ENCODE measurements at regions of chr11 and their contacts with region 1.

Region 1: GRCh38 chr11:73350908-73351636 is 25.1 kb upstream of the RELT start:
- DNase-seq: peak; percentile 72 to 77 (median 75)
- H3K4me3 ChIP-seq: no peak overlapping the region
- H3K4me3 Mint-ChIP-seq: no peak overlapping the region
- H3K27ac ChIP-seq: no peak overlapping the region
- H3K27ac Mint-ChIP-seq: peak overlapping the region; percentile 44 to 87 (median 73)
- H3K4me1 ChIP-seq: no peaks in the 10 kb centered on the region
- H3K4me1 Mint-ChIP-seq: peaks cover 0 to 6% (median 2%) of the 10 kb centered on the region in 4 donors
- H3K27me3 ChIP-seq: no peaks in the 10 kb centered on the region
- H3K27me3 Mint-ChIP-seq: peaks cover 0 to 5% of the 10 kb centered on the region in 2 donors

Region 2: DNA sequence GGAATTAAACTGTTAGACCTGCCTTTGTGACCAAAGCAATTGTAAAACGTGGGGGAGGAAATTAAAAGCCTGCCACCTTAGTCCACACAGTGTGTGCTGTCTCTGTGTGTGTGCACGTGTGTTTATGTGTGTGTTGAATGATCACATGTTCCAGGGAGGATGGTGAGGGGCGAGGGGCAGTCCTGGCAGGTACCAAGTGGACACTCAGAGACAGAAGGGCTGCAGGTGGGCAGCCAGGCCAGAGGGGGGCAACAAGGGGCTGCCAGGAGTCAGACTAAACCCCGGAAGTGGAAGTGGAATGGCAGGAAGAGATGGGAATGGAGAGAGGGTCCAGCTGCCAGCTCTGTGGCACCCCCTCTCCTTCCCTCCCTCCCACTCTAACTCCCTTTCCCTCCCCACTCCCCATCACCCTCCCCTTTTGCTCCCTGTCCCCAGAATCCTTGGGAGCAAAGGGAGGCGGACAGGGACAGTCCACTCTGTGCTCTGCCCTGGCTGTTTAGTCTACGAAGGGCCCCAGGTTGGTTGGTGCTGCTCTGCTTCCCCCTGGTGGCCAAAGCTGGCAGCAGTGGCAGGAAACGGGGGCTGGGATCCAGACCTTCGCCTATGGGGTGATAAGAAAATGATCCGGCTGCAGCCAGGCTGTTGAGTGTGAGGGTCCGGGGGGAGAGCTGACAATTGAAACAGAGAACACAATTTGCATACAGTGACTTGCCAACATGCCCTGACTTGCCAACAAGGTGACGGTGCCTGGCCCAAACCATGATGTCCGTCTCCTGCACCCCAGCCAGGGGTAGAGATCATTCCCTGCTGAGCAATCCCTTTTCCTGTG is 108.6 kb before region 1 on chr11:
- CTCF ChIA-PET with region 1: no interaction called
- POLR2A ChIA-PET with region 1: no interaction called
- intact Hi-C with region 1: no loop called
- DNase-seq: peak in 4 of 5 donors; percentile 45 to 52 (median 48)
- H3K4me3 ChIP-seq: no peak overlapping the region
- H3K4me3 Mint-ChIP-seq: peak overlapping the region in 2 of 8 donors; percentile 52 to 56
- H3K27ac ChIP-seq: no peak overlapping the region
- H3K27ac Mint-ChIP-seq: peak overlapping the region in 1 of 7 donors; percentile 68
- H3K4me1 ChIP-seq: no peaks in the 10 kb centered on the region
- H3K4me1 Mint-ChIP-seq: peaks cover 0 to 4% (median 3%) of the 10 kb centered on the region in 4 donors
- H3K27me3 ChIP-seq: no peaks in the 10 kb centered on the region
- H3K27me3 Mint-ChIP-seq: peaks cover 2 to 12% of the 10 kb centered on the region in 2 donors

Region 3: DNA sequence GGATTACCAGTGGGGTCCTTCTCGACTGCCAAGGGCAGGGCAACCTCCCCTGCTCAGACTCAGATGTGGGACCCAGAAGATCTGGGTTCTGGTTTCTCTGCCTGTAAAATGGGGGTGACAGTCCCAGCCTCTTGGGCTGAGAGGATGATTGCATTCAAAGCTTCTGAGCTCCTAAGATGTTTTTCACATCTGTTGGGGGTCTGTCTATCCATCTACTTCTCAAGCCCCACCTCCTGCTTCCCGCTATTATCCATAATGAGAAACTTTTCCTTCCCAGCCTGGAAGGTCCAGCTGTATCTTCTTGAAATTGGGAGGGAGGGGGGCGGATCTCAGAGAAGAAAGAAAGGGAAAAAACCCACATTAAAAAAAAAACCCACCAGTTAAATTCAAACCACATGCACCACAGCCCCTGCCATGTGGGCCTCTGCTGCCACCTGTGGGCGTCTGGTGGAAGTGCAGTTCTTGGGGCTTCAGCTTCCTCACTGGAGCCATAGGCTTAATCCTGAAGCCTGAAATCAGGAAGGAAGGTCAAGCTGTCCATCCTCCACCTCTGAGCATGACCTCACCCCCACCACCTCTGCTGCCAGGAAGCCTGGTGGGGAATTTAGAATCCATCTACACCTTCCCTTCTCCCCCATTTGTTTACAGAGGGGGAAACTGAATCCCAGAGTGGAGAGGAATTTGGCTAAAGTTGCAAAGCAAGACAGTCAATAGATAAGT is 15.7 kb before region 1 on chr11:
- CTCF ChIA-PET with region 1: interaction called, 21 read pairs
- POLR2A ChIA-PET with region 1: no interaction called
- intact Hi-C with region 1: no loop called
- DNase-seq: peak; percentile 62 to 72 (median 67)
- H3K4me3 ChIP-seq: no peak overlapping the region
- H3K4me3 Mint-ChIP-seq: no peak overlapping the region
- H3K27ac ChIP-seq: no peak overlapping the region
- H3K27ac Mint-ChIP-seq: no peak overlapping the region
- H3K4me1 ChIP-seq: no peaks in the 10 kb centered on the region
- H3K4me1 Mint-ChIP-seq: no peaks in the 10 kb centered on the region
- H3K27me3 ChIP-seq: no peaks in the 10 kb centered on the region
- H3K27me3 Mint-ChIP-seq: peaks cover 0 to 3% of the 10 kb centered on the region in 2 donors

Region 4: GRCh38 chr11:73393479-73394380 is 42.7 kb after region 1 on chr11:
- CTCF ChIA-PET with region 1: interaction called, 319 read pairs
- POLR2A ChIA-PET with region 1: interaction called, 29 read pairs
- intact Hi-C with region 1: loop called (anchors 1 kb)
- DNase-seq: peak; percentile 61 to 69 (median 64)
- H3K4me3 ChIP-seq: no peak overlapping the region
- H3K4me3 Mint-ChIP-seq: no peak overlapping the region
- H3K27ac ChIP-seq: no peak overlapping the region
- H3K27ac Mint-ChIP-seq: peak overlapping the region in 6 of 7 donors; percentile 48 to 84 (median 68)
- H3K4me1 ChIP-seq: no peaks in the 10 kb centered on the region
- H3K4me1 Mint-ChIP-seq: peaks cover 0 to 11% (median 7%) of the 10 kb centered on the region in 4 donors
- H3K27me3 ChIP-seq: no peaks in the 10 kb centered on the region
- H3K27me3 Mint-ChIP-seq: no peaks in the 10 kb centered on the region

Region 5: DNA sequence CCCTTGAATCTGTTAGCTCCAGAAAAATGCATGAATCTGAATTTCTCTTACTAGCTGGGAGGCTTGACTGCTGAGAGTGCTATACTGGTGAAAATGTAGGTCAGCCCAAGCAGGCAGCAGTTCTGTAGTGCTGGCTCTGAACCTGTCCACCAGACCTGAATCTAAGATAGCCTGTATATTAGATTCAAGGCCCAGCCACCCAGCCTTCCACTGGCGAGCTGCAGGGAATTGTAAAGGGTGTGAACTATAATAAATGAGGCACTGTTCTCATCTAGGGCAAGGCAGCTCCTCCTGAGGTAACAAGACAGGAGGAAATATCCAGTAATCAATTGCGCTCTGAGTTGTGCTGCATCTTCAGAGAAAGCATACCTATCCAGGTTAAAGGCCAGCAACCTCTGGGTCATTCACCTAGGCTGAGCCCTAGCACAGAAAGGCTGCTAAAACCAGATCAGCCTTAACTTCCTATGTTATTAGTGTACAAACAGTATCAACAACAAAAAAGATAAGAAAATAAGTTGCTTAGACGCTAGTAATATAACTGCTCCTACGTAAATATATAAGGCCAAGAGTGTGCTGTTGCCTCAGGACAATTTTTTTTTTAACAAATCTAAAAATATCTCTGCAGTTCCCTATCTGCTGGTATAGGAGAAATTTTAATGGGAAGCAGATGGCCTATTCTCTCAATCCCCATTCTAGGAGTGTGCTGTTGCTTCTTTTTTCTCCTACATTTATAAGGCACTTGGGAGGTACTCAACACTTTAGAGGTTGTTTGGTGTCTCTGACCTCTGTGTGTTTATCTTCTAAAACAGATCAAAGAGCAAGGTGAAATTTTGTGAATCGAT is 88.2 kb after region 1 on chr11:
- CTCF ChIA-PET with region 1: interaction called, 11 read pairs
- POLR2A ChIA-PET with region 1: no interaction called
- intact Hi-C with region 1: no loop called
- DNase-seq: no peak
- H3K4me3 ChIP-seq: no peak overlapping the region
- H3K4me3 Mint-ChIP-seq: no peak overlapping the region
- H3K27ac ChIP-seq: no peak overlapping the region
- H3K27ac Mint-ChIP-seq: no peak overlapping the region
- H3K4me1 ChIP-seq: no peaks in the 10 kb centered on the region
- H3K4me1 Mint-ChIP-seq: peaks cover 0 to 3% (median 0%) of the 10 kb centered on the region in 4 donors
- H3K27me3 ChIP-seq: no peaks in the 10 kb centered on the region
- H3K27me3 Mint-ChIP-seq: no peaks in the 10 kb centered on the region

Region 6: GRCh38 chr11:73538381-73538872 is 187.4 kb after region 1 on chr11:
- CTCF ChIA-PET with region 1: no interaction called
- POLR2A ChIA-PET with region 1: no interaction called
- intact Hi-C with region 1: no loop called
- DNase-seq: peak in 2 of 5 donors; percentile 0 to 2
- H3K4me3 ChIP-seq: no peak overlapping the region
- H3K4me3 Mint-ChIP-seq: peak overlapping the region in 3 of 8 donors; percentile 3 to 19 (median 3)
- H3K27ac ChIP-seq: no peak overlapping the region
- H3K27ac Mint-ChIP-seq: peak overlapping the region in 5 of 7 donors; percentile 13 to 51 (median 34)
- H3K4me1 ChIP-seq: peaks cover 15% of the 10 kb centered on the region
- H3K4me1 Mint-ChIP-seq: peaks cover 23 to 38% (median 29%) of the 10 kb centered on the region in 4 donors
- H3K27me3 ChIP-seq: no peaks in the 10 kb centered on the region
- H3K27me3 Mint-ChIP-seq: no peaks in the 10 kb centered on the region

Region 7: DNA sequence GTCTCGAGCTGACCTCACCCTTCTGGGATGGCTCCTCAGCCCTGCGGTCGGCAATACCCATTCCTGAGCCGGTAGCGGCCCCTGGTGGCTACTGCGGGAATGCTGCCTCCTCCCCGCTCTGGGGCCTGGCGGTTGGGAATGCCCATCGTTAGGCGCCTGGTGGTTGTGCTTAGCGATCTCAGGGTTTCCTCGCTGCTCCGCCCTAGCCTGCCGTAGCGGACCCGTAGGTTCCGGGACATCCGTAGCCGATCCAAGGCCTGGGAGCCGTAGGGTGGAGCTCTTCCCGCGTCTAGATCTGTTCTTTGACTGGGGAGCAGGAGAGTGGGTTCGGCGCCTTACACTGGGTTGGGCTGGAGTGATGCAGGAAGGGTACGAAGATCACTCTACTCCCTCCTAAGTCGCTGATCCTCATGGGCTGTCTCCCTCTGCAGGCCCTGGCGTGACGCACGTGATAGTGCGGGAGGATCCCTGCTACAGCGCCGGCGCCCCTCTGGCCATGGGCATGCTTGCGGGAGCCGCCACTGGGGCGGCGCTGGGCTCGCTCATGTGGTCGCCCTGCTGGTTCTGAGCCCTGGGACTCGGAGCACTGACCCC is 310.1 kb after region 1 on chr11:
- CTCF ChIA-PET with region 1: interaction called, 58 read pairs
- POLR2A ChIA-PET with region 1: no interaction called
- intact Hi-C with region 1: loop called (anchors 1 kb)
- DNase-seq: peak; percentile 71 to 81 (median 76)
- H3K4me3 ChIP-seq: peak overlapping the region in 1 of 2 donors; percentile 34
- H3K4me3 Mint-ChIP-seq: peak overlapping the region in 5 of 8 donors; percentile 41 to 56 (median 51)
- H3K27ac ChIP-seq: no peak overlapping the region
- H3K27ac Mint-ChIP-seq: peak overlapping the region in 1 of 7 donors; percentile 77
- H3K4me1 ChIP-seq: peaks cover 13% of the 10 kb centered on the region
- H3K4me1 Mint-ChIP-seq: peaks cover 7 to 18% (median 10%) of the 10 kb centered on the region in 4 donors
- H3K27me3 ChIP-seq: no peaks in the 10 kb centered on the region
- H3K27me3 Mint-ChIP-seq: no peaks in the 10 kb centered on the region